ENCODE measurements at regions of chr10 and their contacts with region 1.

Region 1: GRCh38 chr10:121753726-121754476 is 155.7 kb upstream of the FGFR2 start:
- DNase-seq: no peak
- ATAC-seq: peak; percentile 74 to 91 (median 84)
- H3K4me3 ChIP-seq: no peak overlapping the region
- H3K27ac ChIP-seq: no peak overlapping the region
- H3K4me1 ChIP-seq: peaks cover 14% of the 10 kb centered on the region
- H3K27me3 ChIP-seq: no peaks in the 10 kb centered on the region
- CTCF ChIP-seq: peak; percentile 15

Region 2: GRCh38 chr10:121999318-121999717 is 245.4 kb after region 1 on chr10:
- intact Hi-C with region 1: no loop called
- DNase-seq: no peak
- ATAC-seq: peak; percentile 55 to 70 (median 62)
- H3K4me3 ChIP-seq: peak overlapping the region; percentile 73
- H3K27ac ChIP-seq: peak overlapping the region; percentile 98
- H3K4me1 ChIP-seq: peaks cover 29% of the 10 kb centered on the region
- H3K27me3 ChIP-seq: no peaks in the 10 kb centered on the region
- CTCF ChIP-seq: no peak

Region 3: GRCh38 chr10:123567984-123568739 is 1814.3 kb after region 1 on chr10:
- intact Hi-C with region 1: loop called in 1 of 2 experiments (anchors 5 kb)
- DNase-seq: no peak
- ATAC-seq: no peak
- H3K4me3 ChIP-seq: no peak overlapping the region
- H3K27ac ChIP-seq: no peak overlapping the region
- H3K4me1 ChIP-seq: no peaks in the 10 kb centered on the region
- H3K27me3 ChIP-seq: peaks cover 0 to 42% (median 8%) of the 10 kb centered on the region in 3 donors
- CTCF ChIP-seq: no peak